ENCODE measurements at regions of chr2 and their contacts with region 1.

Region 1: GRCh38 chr2:190679813-190680591 is 31.1 kb downstream of the NAB1 start:
- DNase-seq: peak; percentile 80
- H3K4me3 Mint-ChIP-seq: peak overlapping the region; percentile 61
- H3K27ac Mint-ChIP-seq: peak overlapping the region; percentile 98
- H3K4me1 Mint-ChIP-seq: peaks cover 66% of the 10 kb centered on the region
- H3K27me3 Mint-ChIP-seq: no peaks in the 10 kb centered on the region

Region 2: DNA sequence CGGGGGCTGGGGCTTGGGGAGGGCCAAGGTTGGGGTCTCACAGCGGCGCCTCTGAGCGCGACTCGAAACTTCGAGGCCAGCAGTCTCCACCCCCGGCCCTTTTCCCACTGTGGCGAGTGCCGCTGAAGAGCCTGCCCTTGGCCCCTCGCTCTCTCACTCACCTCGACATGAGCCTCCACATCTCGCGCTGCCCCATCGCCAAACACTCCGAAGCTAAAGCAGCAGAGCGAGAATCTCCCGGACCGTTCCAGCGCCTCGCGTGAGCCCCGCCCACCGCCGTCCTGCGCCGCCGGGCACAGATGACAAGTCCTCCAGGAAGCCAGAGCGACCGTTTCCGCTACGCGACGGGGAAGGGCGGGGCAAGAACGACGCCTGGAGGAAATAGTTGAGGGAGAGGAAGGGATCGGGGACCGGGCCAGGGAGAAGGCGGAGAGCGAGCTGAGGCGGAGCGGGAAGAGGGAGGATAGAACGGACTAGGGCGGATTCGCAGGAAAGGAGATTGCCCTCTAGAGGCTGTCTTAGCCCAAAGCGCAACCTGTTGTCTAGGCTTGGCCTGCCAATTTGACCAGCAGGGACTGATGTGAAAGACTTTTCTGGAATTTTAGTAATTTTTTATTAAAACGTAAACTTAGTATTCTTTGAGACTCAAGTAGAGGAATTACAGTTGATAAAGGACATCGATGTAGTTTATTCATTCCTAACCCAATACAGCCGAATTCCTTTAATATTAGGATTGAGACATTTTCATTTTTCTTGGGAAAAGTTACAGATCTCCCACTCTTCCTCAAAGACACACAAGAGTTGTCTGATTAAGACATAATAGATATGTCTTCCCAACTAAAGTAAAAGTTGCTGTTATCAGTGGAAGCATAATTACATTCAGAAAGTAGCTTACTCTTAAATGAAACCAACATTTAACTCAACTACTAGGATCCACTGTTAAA is 360.2 kb before region 1 on chr2 and contains the start of gene HIBCH:
- CTCF ChIA-PET with region 1: no interaction called
- POLR2A ChIA-PET with region 1: no interaction called
- intact Hi-C with region 1: loop called (anchors 1 kb)
- DNase-seq: peak; percentile 96
- H3K4me3 Mint-ChIP-seq: peak within 1 kb of the TSS; percentile 87
- H3K27ac Mint-ChIP-seq: peak within 1 kb of the TSS; percentile 94
- H3K4me1 Mint-ChIP-seq: peaks cover 52% of the 10 kb centered on the region
- H3K27me3 Mint-ChIP-seq: no peaks in the 10 kb centered on the region
- total RNA-seq, gene HIBCH: 33.9 to 37.8 TPM

Region 3: DNA sequence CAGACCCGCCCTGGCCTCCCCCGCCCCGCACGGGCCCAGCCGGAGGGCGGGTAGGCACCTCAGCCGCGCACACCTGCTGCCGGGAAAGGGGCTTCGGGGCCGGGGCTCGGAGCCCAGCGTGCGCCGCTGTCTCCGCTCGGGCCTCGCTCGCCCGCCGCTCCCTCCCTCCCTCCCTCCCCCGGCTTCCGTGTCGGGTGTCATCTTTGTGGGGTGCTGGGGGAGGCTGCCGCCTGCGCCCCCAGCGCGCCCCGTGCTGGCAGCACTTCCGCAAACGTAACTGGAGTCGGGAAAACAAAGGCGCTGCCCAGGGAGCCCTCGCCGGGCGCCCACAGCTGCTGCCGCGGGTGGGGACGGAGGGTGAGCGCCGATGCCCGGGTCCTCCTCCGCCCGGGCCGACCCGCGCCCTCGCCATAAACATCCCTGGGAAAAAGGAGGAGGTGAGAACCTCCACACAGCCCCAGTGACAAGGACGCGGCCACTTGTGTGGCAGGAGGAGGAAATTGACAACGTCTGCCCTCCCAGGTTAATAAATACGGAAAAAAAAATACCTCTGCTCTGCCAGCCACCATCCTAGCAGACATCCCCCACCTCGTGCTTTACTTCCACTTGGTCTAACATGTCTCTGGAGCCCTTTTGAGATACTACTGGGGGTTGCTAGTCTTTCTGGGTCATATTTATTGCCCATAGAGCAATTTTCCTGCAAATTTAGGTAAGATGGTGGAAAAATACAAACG is 271.3 kb before region 1 on chr2:
- CTCF ChIA-PET with region 1: interaction called, 3 read pairs
- POLR2A ChIA-PET with region 1: no interaction called
- intact Hi-C with region 1: loop called (anchors 1 kb)
- DNase-seq: peak; percentile 80
- H3K4me3 Mint-ChIP-seq: peak overlapping the region; percentile 82
- H3K27ac Mint-ChIP-seq: peak overlapping the region; percentile 88
- H3K4me1 Mint-ChIP-seq: peaks cover 40% of the 10 kb centered on the region
- H3K27me3 Mint-ChIP-seq: no peaks in the 10 kb centered on the region

Region 4: GRCh38 chr2:190583507-190584337 is 96.3 kb before region 1 on chr2:
- CTCF ChIA-PET with region 1: no interaction called
- POLR2A ChIA-PET with region 1: no interaction called
- intact Hi-C with region 1: no loop called
- DNase-seq: no peak
- H3K4me3 Mint-ChIP-seq: no peak overlapping the region
- H3K27ac Mint-ChIP-seq: no peak overlapping the region
- H3K4me1 Mint-ChIP-seq: peaks cover 9% of the 10 kb centered on the region
- H3K27me3 Mint-ChIP-seq: no peaks in the 10 kb centered on the region

Region 5: GRCh38 chr2:190636373-190636772 is 43.6 kb before region 1 on chr2:
- CTCF ChIA-PET with region 1: interaction called, 14 read pairs
- POLR2A ChIA-PET with region 1: no interaction called
- intact Hi-C with region 1: loop called (anchors 1 kb)
- DNase-seq: no peak
- H3K4me3 Mint-ChIP-seq: no peak overlapping the region
- H3K27ac Mint-ChIP-seq: no peak overlapping the region
- H3K4me1 Mint-ChIP-seq: peaks cover 10% of the 10 kb centered on the region
- H3K27me3 Mint-ChIP-seq: no peaks in the 10 kb centered on the region

Region 6: DNA sequence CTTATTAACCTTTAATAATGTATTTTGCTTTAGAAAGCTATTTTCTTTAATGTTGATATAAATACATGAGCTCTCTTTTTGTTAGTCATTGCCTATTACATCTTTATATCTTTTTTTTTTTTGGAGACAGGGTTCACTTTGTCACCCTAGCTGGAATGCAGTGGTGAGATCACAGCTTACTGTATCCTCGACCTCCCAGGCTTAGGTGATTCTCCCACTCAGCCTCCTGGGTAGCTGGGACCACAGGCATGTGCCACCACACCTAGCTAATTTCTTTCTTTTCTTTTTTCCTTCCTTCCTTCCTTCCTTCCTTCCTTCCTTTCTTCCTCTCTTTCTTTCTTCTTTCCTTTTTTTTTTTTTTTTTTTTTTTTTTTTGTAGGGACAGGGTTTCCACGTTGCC is 15.8 kb before region 1 on chr2:
- CTCF ChIA-PET with region 1: interaction called, 18 read pairs
- POLR2A ChIA-PET with region 1: interaction called, 3 read pairs
- intact Hi-C with region 1: no loop called
- DNase-seq: no peak
- H3K4me3 Mint-ChIP-seq: no peak overlapping the region
- H3K27ac Mint-ChIP-seq: no peak overlapping the region
- H3K4me1 Mint-ChIP-seq: peaks cover 53% of the 10 kb centered on the region
- H3K27me3 Mint-ChIP-seq: no peaks in the 10 kb centered on the region

Region 7: GRCh38 chr2:190759749-190760213 is 79.8 kb after region 1 on chr2:
- CTCF ChIA-PET with region 1: no interaction called
- POLR2A ChIA-PET with region 1: no interaction called
- intact Hi-C with region 1: loop called (anchors 2 kb)
- DNase-seq: no peak
- H3K4me3 Mint-ChIP-seq: peak overlapping the region; percentile 51
- H3K27ac Mint-ChIP-seq: peak overlapping the region; percentile 18
- H3K4me1 Mint-ChIP-seq: peaks cover 32% of the 10 kb centered on the region
- H3K27me3 Mint-ChIP-seq: no peaks in the 10 kb centered on the region

Region 8: DNA sequence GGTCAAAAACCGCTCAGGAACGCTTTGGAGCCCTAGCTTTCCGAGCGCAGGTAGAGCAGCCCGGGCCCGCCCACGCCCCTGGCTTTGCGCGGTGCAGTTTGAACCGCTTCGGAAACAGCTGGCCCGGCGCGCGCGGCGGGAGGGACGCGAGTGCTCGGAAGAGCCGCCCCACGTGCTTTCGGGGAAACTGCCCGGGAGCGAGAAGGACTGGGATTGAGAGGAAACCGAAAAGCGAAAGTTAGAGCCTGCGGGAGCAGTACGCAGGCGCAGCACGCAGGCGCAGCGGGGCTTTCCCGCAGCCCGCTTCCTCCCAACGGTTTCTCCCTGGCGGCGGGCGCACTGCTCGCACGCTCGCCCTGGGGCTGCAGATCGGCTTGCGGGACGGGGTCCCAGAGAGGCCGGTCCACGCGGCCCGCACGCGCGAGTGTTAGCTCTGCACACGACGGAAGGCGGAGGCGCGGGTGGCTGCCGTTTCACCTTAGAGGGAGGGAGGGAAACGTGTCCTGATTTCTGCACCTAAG is 340.3 kb after region 1 on chr2:
- CTCF ChIA-PET with region 1: no interaction called
- POLR2A ChIA-PET with region 1: no interaction called
- intact Hi-C with region 1: loop called (anchors 1 kb)
- DNase-seq: peak; percentile 97
- H3K4me3 Mint-ChIP-seq: no peak overlapping the region
- H3K27ac Mint-ChIP-seq: no peak overlapping the region
- H3K4me1 Mint-ChIP-seq: peaks cover 34% of the 10 kb centered on the region
- H3K27me3 Mint-ChIP-seq: peaks cover 2% of the 10 kb centered on the region

Measured in activated CD4-positive, alpha-beta memory T cell treated with anti-CD3 and anti-CD28 coated beads for 36 hours (primary cell).